H1 (cell line): ENCODE measurements at regions of chr4 and their contacts with region 1.

Region 1: DNA sequence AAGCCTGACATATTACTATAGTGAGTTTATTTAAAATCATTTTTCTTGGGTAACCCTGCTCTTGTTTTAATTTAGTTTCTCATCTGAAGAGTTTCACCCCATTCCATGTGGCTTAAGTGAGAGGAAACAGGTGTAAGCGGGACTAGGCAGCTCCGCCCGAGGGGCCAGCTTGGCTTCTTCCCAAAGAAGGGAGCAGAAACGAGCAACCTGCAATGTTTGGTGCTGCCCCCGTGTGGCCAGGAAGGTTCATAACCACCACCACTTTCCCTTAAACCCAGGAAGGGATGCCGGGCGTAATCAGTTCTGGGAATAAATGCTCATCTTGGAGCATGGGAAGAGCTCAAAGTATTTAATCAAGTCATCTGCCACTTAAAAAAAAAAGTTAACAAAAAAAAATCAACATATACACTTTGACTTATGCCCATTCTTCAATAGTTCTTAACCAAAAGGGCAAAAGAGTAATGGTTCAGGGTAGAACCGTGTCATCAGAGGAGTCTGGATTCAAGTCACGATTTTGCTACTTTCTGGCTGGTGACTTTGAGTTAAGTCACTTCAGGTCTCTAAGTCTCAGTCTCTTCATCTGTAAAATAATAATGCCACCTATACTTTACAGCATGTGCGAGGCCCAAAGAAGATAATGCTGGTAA is 147.9 kb downstream of the NSUN7 start:
- DNase-seq: peak; percentile 43 to 93
- H3K4me3 ChIP-seq: no peak overlapping the region
- H3K27ac ChIP-seq: no peak overlapping the region
- H3K4me1 ChIP-seq: no peaks in the 10 kb centered on the region
- H3K27me3 ChIP-seq: no peaks in the 10 kb centered on the region
- CTCF ChIP-seq: peak; percentile 79 to 90 (median 89)
- EP300 ChIP-seq: no peak
- POLR2A ChIP-seq: no peak
- RAD21 ChIP-seq: peak; percentile 73 to 78

Region 2: DNA sequence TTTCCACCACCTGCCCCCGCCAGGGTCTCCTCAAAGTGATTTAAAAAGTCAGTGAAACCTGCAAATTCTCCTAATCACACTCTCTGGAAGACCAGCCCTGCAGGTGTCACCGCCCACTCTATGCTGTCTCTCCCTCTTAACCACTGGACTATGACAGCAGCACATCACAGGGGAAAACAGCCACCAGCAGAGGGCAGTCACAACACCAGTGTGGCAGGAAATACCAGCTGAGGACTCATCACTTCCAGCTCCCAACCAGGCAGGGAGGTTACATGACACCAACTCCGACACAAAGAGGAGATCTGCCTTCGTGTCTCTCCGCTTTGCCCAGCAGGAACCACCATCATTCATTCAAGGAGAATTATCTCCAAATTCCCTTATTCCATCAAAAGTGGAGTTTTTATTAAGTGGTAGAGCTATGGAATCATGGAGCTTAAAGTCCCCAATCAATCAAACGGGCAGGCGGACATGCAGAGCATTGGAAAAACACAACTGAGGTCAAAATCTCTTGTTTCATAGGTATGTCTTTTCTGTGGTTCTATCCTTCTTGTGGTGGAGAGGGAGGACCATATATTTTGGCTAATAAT is 56.6 kb before region 1 on chr4:
- CTCF ChIA-PET with region 1: interaction called, 97 read pairs
- POLR2A ChIA-PET with region 1: interaction called, 3 read pairs
- DNase-seq: peak; percentile 89 to 97
- H3K4me3 ChIP-seq: no peak overlapping the region
- H3K27ac ChIP-seq: no peak overlapping the region
- H3K4me1 ChIP-seq: peaks cover 0 to 6% (median 0%) of the 10 kb centered on the region in 4 experiments; a peak in 1 of 7 replicates
- H3K27me3 ChIP-seq: no peaks in the 10 kb centered on the region
- CTCF ChIP-seq: peak; percentile 88 to 99 (median 98)
- EP300 ChIP-seq: peak in 1 of 2 experiments; percentile 28; a peak in 1 of 3 replicates
- POLR2A ChIP-seq: no peak
- RAD21 ChIP-seq: peak; percentile 70 to 77

Region 3: DNA sequence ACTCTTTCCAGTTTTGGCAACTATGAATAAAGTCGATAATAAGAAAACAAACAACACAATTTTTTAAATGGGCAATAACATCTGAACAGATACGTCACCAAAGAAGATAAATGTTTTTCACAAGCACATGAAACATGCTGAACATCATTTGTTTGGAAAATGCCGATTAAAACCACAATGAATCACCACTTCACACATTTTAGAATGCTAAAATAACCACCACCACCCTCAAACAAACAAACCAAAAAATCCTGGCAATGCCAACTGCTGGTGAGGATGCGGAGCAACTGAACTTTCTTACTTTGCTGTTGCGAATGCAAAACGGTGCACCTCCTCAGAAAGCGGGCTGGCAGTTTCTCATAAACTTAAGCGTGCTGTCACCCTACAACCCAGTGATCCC is 32.0 kb before region 1 on chr4:
- CTCF ChIA-PET with region 1: interaction called, 15 read pairs
- POLR2A ChIA-PET with region 1: no interaction called
- DNase-seq: no peak
- H3K4me3 ChIP-seq: no peak overlapping the region
- H3K27ac ChIP-seq: no peak overlapping the region
- H3K4me1 ChIP-seq: no peaks in the 10 kb centered on the region
- H3K27me3 ChIP-seq: no peaks in the 10 kb centered on the region
- CTCF ChIP-seq: no peak
- EP300 ChIP-seq: no peak
- POLR2A ChIP-seq: no peak
- RAD21 ChIP-seq: no peak

Region 4: DNA sequence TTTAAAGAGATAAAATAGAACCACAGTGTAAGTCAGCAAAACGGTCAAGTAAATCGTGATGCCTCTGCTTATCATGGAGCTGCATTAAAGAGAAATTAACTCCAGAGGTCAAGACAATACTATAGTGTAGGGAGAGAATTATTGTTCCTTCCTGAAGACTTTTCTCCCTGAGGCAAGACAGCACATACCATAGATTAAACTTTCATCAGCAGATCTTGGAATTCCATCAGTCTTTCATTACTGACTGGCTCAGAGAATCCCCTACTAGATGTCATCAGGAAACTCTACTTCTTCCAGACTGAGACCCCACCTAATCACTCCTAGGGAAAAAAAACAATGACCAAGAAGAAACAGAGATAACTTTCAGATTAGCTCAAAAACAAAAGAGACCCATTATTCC is 16.6 kb before region 1 on chr4:
- CTCF ChIA-PET with region 1: interaction called, 17 read pairs
- POLR2A ChIA-PET with region 1: interaction called, 3 read pairs
- DNase-seq: no peak
- H3K4me3 ChIP-seq: no peak overlapping the region
- H3K27ac ChIP-seq: no peak overlapping the region
- H3K4me1 ChIP-seq: no peaks in the 10 kb centered on the region
- H3K27me3 ChIP-seq: no peaks in the 10 kb centered on the region
- CTCF ChIP-seq: no peak
- EP300 ChIP-seq: no peak
- POLR2A ChIP-seq: no peak
- RAD21 ChIP-seq: no peak

Region 5: GRCh38 chr4:40887288-40888131 is 10.2 kb before region 1 on chr4:
- CTCF ChIA-PET with region 1: interaction called, 17 read pairs
- POLR2A ChIA-PET with region 1: interaction called, 3 read pairs
- DNase-seq: no peak
- H3K4me3 ChIP-seq: no peak overlapping the region
- H3K27ac ChIP-seq: no peak overlapping the region
- H3K4me1 ChIP-seq: no peaks in the 10 kb centered on the region
- H3K27me3 ChIP-seq: no peaks in the 10 kb centered on the region
- CTCF ChIP-seq: no peak
- EP300 ChIP-seq: no peak
- POLR2A ChIP-seq: no peak
- RAD21 ChIP-seq: no peak

Region 6: GRCh38 chr4:40908702-40909362 is 11.2 kb after region 1 on chr4:
- CTCF ChIA-PET with region 1: interaction called, 23 read pairs
- POLR2A ChIA-PET with region 1: interaction called, 4 read pairs
- DNase-seq: peak; percentile 69 to 88
- H3K4me3 ChIP-seq: no peak overlapping the region
- H3K27ac ChIP-seq: no peak overlapping the region
- H3K4me1 ChIP-seq: peaks cover 0 to 7% (median 4%) of the 10 kb centered on the region in 4 experiments; a peak in 5 of 7 replicates
- H3K27me3 ChIP-seq: no peaks in the 10 kb centered on the region
- CTCF ChIP-seq: peak; percentile 98 to 100 (median 99)
- EP300 ChIP-seq: no peak
- POLR2A ChIP-seq: no peak
- RAD21 ChIP-seq: peak; percentile 87 to 90

Region 7: GRCh38 chr4:40916880-40917279 is 19.2 kb after region 1 on chr4:
- CTCF ChIA-PET with region 1: interaction called, 23 read pairs
- POLR2A ChIA-PET with region 1: interaction called, 4 read pairs
- DNase-seq: peak; percentile 27 to 77
- H3K4me3 ChIP-seq: no peak overlapping the region
- H3K27ac ChIP-seq: no peak overlapping the region
- H3K4me1 ChIP-seq: peaks cover 0 to 9% (median 0%) of the 10 kb centered on the region in 4 experiments; a peak in 4 of 7 replicates
- H3K27me3 ChIP-seq: no peaks in the 10 kb centered on the region
- CTCF ChIP-seq: peak; percentile 71 to 80 (median 78)
- EP300 ChIP-seq: no peak
- POLR2A ChIP-seq: no peak
- RAD21 ChIP-seq: peak; percentile 37 to 47; a peak in 3 of 4 replicates

Region 8: DNA sequence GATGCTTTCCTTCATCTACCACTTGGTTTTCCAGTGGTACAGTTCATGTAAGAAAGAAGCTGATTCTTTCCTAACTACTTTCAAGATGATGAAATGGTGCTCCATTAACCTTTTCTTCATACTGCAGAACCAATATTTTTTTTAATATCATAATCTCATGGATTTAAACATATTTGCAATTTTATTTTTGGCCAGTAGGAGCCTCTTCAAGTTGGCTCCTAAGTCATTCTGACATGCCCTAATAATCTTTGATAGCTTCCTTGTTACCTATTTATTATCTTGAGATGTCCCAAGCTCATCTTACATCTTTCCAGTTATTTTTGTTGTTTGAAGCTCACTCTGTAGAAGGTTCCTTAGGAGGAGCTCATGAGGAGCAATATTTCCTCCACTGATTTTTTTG is 146.5 kb after region 1 on chr4:
- CTCF ChIA-PET with region 1: no interaction called
- POLR2A ChIA-PET with region 1: no interaction called
- DNase-seq: no peak
- H3K4me3 ChIP-seq: no peak overlapping the region
- H3K27ac ChIP-seq: no peak overlapping the region
- H3K4me1 ChIP-seq: no peaks in the 10 kb centered on the region
- H3K27me3 ChIP-seq: no peaks in the 10 kb centered on the region
- CTCF ChIP-seq: no peak
- EP300 ChIP-seq: no peak
- POLR2A ChIP-seq: no peak
- RAD21 ChIP-seq: no peak